ENCODE measurements at regions of chr14 and their contacts with region 1.

Region 1: GRCh38 chr14:60184146-60184904 is 19.1 kb upstream of the DHRS7 start:
- DNase-seq: no peak
- H3K4me3 ChIP-seq: no peak overlapping the region
- CTCF ChIP-seq: no peak
- POLR2A ChIP-seq: no peak

Region 2: DNA sequence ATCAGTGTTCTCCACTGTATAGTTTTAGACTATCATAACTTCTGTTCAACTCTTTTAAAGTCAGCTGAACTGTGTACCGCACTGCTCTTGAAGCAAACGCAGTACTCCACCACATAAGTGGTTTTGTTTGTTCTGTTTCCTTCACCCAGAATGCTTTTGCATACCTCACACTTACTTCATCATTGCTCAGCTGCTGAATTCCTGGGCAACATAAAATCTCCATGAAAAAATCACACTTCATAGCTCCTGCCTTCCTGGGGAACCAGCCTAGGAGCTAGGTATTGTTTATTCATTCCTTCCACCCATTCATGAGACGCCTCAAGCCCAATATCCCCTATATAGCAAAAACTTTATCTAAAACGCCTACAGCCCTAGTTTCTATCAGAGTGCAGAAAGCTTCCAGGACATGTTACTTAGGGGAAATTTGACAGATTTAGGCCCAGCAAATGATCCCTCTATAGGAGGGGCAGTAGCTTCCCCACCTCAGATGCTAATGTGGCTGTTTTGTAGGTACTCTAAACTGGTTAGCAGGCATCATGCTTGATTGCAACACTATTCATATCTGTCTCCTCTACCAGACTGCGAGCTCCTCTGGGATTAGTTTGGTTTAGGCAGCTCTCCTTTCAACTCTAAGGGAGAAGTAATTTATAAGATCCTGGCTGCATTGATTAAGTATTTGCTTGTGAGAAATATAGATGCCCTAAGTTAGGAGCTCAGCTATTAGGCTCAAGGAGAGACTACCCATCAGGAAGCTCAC is 219.9 kb before region 1 on chr14:
- intact Hi-C with region 1: loop called (anchors 10 kb)
- DNase-seq: no peak
- H3K4me3 ChIP-seq: no peak overlapping the region
- CTCF ChIP-seq: no peak
- POLR2A ChIP-seq: no peak

Region 3: GRCh38 chr14:60212503-60213371 is 28.4 kb after region 1 on chr14:
- intact Hi-C with region 1: no loop called
- DNase-seq: no peak
- H3K4me3 ChIP-seq: no peak overlapping the region
- CTCF ChIP-seq: no peak
- POLR2A ChIP-seq: no peak

Region 4: GRCh38 chr14:62093736-62094135 is 1909.4 kb after region 1 on chr14:
- intact Hi-C with region 1: loop called (anchors 5 kb)
- DNase-seq: no peak
- H3K4me3 ChIP-seq: no peak overlapping the region
- CTCF ChIP-seq: no peak
- POLR2A ChIP-seq: no peak

Measured in lower leg skin (tissue), 4 donors.